Right ventricle myocardium superior (tissue), 1 donor: ENCODE measurements at regions of chr12 and their contacts with region 1.

Region 1: GRCh38 chr12:108678104-108678730 is 44.5 kb upstream of the SELPLG start:
- DNase-seq: no peak
- ATAC-seq: no peak

Region 2: DNA sequence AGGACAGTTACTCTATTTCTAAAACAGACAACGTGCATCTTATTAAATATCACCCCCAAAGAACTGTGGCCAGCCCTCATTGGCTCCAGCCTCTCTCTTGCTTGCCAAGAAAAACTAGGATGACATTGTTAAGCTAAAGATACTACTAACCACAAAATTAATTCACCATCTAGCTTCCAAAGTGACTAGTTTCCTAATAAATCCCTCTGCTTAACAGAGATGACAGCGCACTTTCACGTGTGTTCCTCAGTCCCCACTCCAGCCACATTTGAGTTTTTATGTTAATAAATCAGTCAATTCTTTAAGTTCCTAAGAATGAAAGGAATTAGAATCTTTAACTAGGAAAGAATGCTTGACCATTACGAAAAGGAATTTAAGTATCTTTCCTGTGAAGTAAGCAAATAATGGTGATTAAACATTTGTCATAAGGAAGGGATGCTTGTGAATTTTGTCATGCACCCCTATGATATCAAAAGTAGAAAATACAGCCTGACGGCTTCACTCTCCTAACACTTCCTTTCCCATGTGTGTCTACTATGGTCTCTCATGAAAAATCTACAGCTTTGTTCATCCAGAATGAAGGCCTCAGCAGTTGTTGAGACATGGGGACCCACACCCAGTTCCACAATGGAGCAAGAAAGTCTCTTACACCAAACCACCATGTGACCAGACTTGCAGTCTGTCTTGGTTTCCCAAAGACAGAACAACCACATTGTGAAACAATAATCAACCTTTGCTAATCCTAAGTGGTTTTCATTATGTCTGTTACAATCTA is 45.0 kb after region 1 on chr12:
- intact Hi-C with region 1: loop called (anchors 10 kb)
- DNase-seq: no peak
- ATAC-seq: peak; percentile 54